Activated CD8-positive, alpha-beta T cell treated with anti-CD3 and anti-CD28 coated beads for 36 hours (primary cell): ENCODE measurements at regions of chr20 and their contacts with region 1.

Region 1: DNA sequence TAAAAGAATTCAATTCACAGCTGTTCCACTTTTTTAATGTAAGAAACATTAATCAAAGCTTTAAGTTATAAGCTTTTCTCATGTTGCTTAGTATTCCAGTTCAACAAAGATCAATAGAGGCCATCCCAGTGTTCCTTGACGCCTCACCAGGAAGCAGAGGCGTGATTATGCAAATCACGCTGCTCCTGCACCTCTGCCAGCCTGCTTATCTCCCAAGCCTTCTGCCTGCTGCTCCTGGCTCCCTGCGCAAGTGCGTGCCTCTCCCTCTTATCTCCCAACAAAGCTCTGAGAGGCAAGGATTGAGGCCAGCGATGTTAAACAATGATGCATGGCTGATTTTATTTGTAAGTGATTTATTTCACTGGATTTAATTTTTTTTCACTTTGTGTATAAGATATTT is 42.8 kb downstream of the INSM1 start:
- DNase-seq: no peak
- ATAC-seq: no peak
- H3K4me3 Mint-ChIP-seq: peak overlapping the region; percentile 23
- H3K27ac Mint-ChIP-seq: peak overlapping the region; percentile 47
- H3K4me1 Mint-ChIP-seq: peaks cover 13% of the 10 kb centered on the region
- H3K27me3 Mint-ChIP-seq: no peaks in the 10 kb centered on the region
- CTCF ChIP-seq: no peak

Region 2: DNA sequence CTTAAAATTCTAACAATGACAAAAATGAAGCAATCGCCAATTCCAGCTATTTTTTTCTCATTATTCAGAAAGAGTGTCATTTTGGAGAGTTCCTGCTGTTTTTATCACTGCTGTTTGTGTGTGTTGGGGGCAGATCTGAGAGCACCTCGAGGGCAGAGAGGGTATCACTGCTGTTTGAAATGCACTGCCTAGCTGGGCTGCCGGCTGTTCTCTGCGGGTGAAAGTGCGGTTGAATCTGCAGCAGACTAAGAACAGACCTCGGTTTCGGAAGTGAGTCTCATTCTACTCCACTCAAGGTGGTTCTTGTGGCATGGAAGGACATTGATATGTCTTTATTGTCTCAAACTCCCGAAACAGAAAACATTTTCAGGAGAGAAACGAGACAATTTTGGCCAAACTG is 24.5 kb before region 1 on chr20:
- CTCF ChIA-PET with region 1: no interaction called
- POLR2A ChIA-PET with region 1: no interaction called
- intact Hi-C with region 1: no loop called
- DNase-seq: no peak
- ATAC-seq: no peak
- H3K4me3 Mint-ChIP-seq: no peak overlapping the region
- H3K27ac Mint-ChIP-seq: no peak overlapping the region
- H3K4me1 Mint-ChIP-seq: no peaks in the 10 kb centered on the region
- H3K27me3 Mint-ChIP-seq: peaks cover 2% of the 10 kb centered on the region
- CTCF ChIP-seq: no peak

Region 3: GRCh38 chr20:20489054-20489453 is 78.4 kb after region 1 on chr20:
- CTCF ChIA-PET with region 1: no interaction called
- POLR2A ChIA-PET with region 1: no interaction called
- intact Hi-C with region 1: loop called (anchors 5 kb)
- DNase-seq: no peak
- ATAC-seq: no peak
- H3K4me3 Mint-ChIP-seq: peak overlapping the region; percentile 52
- H3K27ac Mint-ChIP-seq: peak overlapping the region; percentile 80
- H3K4me1 Mint-ChIP-seq: peaks cover 49% of the 10 kb centered on the region
- H3K27me3 Mint-ChIP-seq: no peaks in the 10 kb centered on the region
- CTCF ChIP-seq: no peak